Ovary (tissue), 10 donors: ENCODE measurements at regions of chr1 and their contacts with region 1.

Region 1: DNA sequence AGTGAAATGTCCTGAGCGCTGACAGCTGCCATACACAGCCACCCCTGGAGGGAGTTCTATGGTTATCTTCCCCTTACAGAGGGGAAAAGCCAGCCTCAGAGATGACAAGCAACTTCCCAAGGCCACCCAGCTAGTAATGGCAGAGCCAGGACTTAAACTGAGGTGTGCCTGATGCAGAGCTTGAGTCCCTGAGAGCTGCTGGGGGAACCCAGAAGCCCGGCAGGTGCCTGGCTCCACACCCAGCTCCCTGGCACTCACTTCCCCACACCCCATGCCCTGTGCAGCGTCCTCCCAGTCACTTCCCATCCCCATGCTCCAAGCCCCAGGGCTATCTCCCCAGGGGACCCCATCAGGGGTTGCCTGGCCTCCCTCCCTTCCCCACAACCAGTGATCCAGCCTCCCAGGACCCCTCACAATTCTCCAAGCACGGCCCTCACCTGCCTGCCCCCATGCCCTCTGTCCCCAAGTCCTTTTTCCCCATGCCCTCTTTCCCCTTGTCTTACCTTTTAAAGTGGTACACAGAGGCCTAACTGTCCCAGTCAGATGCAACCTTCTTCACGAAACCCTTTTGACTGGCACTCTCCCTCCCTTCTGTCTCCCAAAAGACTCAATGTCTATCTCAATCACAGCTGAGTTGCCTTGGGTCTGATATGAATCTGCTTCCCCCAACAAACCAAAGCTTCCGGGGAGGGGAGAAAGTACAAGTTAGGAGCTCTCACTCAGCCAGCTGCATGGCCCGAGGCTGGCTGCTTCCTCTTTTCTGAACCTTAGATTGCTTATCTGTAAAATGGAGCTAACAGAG is 39.8 kb upstream of the LRP8 start:
- DNase-seq: peak in 2 of 5 donors; percentile 3 to 8
- H3K4me3 ChIP-seq: no peak overlapping the region
- H3K27ac ChIP-seq: no peak overlapping the region
- H3K4me1 ChIP-seq: no peaks in the 10 kb centered on the region
- H3K27me3 ChIP-seq: no peaks in the 10 kb centered on the region
- CTCF ChIP-seq: no peak
- EP300 ChIP-seq: no peak
- POLR2A ChIP-seq: no peak

Region 2: GRCh38 chr1:53110370-53111072 is 257.2 kb before region 1 on chr1:
- intact Hi-C with region 1: no loop called
- DNase-seq: no peak
- H3K4me3 ChIP-seq: no peak overlapping the region
- H3K27ac ChIP-seq: no peak overlapping the region
- H3K4me1 ChIP-seq: peaks cover 10% of the 10 kb centered on the region
- H3K27me3 ChIP-seq: no peaks in the 10 kb centered on the region
- CTCF ChIP-seq: no peak
- EP300 ChIP-seq: no peak
- POLR2A ChIP-seq: no peak

Region 3: DNA sequence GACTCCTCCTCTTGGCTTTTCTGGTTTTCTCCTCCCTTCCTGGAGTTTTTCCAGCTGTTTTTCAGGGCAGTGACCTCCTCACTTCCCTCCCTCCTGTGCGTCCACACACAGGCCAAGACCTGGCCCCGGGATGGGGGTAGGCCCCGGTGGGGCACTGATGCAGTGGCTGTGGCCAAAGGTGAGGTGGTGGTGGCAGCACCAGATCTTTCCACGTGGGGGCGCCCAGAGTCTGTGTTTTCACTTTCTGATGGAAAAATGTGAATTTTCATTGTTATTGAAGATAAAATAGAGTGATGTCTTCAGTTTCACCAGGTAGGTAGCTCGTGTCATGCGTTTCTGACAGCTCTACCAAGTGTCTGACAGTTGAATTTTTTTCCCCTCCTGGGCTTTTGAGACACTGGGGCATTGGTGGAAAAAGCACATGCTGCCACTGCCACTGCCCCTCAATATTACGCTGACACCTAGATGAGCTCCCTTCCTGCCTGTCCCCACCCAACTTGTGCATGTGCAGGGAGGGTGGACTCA is 89.4 kb before region 1 on chr1:
- intact Hi-C with region 1: no loop called
- DNase-seq: peak; percentile 38 to 75 (median 64)
- H3K4me3 ChIP-seq: no peak overlapping the region
- H3K27ac ChIP-seq: no peak overlapping the region
- H3K4me1 ChIP-seq: no peaks in the 10 kb centered on the region
- H3K27me3 ChIP-seq: no peaks in the 10 kb centered on the region
- CTCF ChIP-seq: peak; percentile 65 to 80 (median 77)
- EP300 ChIP-seq: no peak
- POLR2A ChIP-seq: no peak

Region 4: DNA sequence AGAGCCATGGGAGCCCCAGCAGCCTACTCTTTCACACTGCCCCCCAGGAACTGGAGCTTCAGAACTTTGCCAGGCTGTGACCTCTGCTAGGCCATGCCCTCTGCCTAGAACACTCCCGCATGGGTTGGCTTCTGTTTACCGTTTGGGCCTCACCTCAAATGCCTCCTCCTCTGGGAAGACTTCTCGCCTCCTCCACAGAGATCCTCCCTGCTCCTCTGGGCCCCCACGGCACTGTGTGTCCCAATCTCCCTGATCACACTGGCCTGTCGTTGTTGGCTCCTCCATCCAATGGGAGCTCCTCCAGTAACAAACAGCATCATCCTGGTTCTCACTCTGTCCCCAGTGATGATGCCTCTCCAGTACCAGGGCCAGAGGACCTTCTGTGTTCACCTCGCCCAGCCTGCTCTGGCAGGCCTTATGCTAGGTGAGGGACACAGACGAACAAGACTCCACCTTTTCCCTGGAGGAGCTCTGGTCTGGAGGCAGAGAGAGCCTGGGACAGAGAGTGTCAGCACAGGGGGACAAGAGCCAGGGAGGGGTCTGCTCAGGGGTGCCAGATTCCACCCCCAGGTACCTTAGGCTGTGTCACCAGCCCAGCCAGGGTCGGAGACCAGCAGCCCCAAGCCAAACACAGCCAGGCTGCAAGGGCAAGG is 35.7 kb before region 1 on chr1:
- intact Hi-C with region 1: loop called in 1 of 4 experiments (anchors 1 kb)
- DNase-seq: peak in 3 of 5 donors; percentile 2 to 16 (median 5)
- H3K4me3 ChIP-seq: no peak overlapping the region
- H3K27ac ChIP-seq: no peak overlapping the region
- H3K4me1 ChIP-seq: peaks cover 1% of the 10 kb centered on the region
- H3K27me3 ChIP-seq: no peaks in the 10 kb centered on the region
- CTCF ChIP-seq: no peak
- EP300 ChIP-seq: no peak
- POLR2A ChIP-seq: no peak

Region 5: GRCh38 chr1:53413175-53414001 is 45.7 kb after region 1 on chr1:
- intact Hi-C with region 1: no loop called
- DNase-seq: no peak
- H3K4me3 ChIP-seq: no peak overlapping the region
- H3K27ac ChIP-seq: no peak overlapping the region
- H3K4me1 ChIP-seq: no peaks in the 10 kb centered on the region
- H3K27me3 ChIP-seq: no peaks in the 10 kb centered on the region
- CTCF ChIP-seq: no peak
- EP300 ChIP-seq: no peak
- POLR2A ChIP-seq: no peak

Region 6: DNA sequence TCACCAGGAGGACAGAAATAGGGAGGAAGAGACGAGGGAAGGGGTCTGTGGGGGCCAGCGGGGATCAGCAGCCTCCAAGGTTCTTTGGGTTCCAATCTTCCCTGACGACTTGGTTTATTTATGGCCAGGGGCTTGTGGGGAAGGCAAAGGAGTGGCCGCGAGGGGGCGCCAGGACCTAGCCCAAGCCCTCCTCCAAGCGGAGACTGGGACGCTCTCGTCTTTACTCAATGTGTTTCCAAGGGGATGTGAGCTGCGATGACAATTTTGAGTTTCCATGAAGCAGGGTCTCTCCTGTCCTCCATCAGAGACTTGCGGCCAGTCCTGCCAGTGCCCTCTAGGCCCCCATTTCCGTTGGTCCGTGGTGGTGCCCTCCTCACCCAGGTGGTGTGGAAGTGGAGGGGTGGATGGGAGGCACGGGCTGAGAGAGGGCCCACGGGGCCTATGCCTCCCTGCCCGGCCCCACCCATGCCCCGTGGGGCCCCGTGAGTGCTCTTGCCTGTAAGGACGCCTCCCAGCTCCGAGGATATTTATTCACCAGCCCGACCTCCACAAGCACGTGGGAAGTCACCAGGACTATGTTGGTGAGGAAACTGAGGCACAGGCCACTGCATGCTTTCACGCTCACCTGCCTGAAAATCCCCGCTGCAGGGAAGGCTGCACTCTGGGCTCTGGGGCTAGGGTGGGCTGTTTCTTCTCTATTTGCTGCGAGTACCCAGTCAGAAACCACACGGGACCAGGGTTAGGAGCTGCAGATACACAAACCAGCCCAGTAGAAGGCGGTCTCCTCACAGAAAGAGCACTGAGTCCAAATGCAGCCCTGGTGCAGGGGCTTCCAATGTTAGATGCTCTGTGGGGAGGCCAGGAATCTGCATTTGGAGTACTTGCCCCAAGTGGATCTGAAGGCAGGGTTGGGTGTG is 118.0 kb after region 1 on chr1:
- intact Hi-C with region 1: no loop called
- DNase-seq: peak; percentile 61 to 87 (median 67)
- H3K4me3 ChIP-seq: no peak overlapping the region
- H3K27ac ChIP-seq: no peak overlapping the region
- H3K4me1 ChIP-seq: no peaks in the 10 kb centered on the region
- H3K27me3 ChIP-seq: no peaks in the 10 kb centered on the region
- CTCF ChIP-seq: peak; percentile 31 to 56 (median 51)
- EP300 ChIP-seq: no peak
- POLR2A ChIP-seq: no peak